ENCODE measurements at regions of chr1 and their contacts with region 1.

Region 1: DNA sequence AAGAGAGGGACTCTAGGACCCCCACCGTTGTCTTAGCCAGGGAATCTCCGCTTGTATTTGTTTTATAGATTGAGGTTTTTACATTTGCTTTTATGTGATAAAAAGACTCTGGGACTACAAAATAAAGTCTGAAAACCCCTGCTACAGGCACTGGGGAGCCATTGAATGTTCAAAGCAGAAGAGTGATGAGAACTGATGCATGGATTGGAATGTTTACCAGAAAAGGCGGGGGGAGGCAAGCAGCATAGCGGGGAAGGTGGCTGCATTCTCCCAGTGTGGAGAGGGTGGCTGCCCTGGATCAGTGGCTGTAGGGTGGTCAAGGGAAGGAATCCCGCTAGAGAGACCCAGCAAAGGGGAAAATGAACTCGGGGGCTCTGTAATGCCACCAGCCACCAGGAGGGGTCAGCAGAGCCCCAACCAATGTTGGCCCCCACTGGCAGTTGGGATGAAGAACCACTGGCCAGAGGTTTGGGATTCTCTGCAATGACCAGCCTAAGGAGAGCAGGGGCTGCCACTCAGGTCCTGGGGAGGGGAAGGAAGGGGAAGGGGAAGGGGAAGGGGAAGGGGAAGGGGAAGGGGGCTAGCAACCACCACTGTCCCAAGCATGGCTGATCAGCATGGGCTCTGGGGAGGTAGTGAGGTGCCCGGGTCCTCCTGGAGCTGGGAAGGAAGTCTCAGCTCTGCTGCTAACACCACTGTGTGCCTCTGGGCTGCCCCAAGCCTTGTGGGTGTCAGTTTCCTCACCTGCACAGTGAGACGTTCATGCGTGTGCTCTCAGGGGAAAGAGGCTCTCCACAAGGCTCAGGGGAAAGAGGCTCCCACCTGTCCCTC is 19.2 kb upstream of the PEF1 start:
- DNase-seq: peak; percentile 57 to 77
- ATAC-seq: peak; percentile 65 to 85 (median 78)
- H3K4me3 ChIP-seq: no peak overlapping the region
- H3K27ac ChIP-seq: no peak overlapping the region
- H3K4me1 ChIP-seq: no peaks in the 10 kb centered on the region
- H3K27me3 ChIP-seq: no peaks in the 10 kb centered on the region
- CTCF ChIP-seq: peak; percentile 86

Region 2: GRCh38 chr1:31617917-31618660 is 45.7 kb before region 1 on chr1:
- intact Hi-C with region 1: no loop called
- DNase-seq: peak; percentile 43 to 66
- ATAC-seq: peak; percentile 32 to 77 (median 60)
- H3K4me3 ChIP-seq: peak overlapping the region; percentile 71
- H3K27ac ChIP-seq: no peak overlapping the region
- H3K4me1 ChIP-seq: no peaks in the 10 kb centered on the region
- H3K27me3 ChIP-seq: peaks cover 0 to 24% (median 7%) of the 10 kb centered on the region in 3 donors
- CTCF ChIP-seq: peak; percentile 67

Region 3: GRCh38 chr1:31715087-31715872 is 51.4 kb after region 1 on chr1:
- intact Hi-C with region 1: loop called (anchors 5 kb)
- DNase-seq: peak; percentile 96 to 98
- ATAC-seq: peak; percentile 93 to 96 (median 94)
- H3K4me3 ChIP-seq: peak overlapping the region; percentile 66
- H3K27ac ChIP-seq: peak overlapping the region; percentile 91
- H3K4me1 ChIP-seq: peaks cover 12% of the 10 kb centered on the region
- H3K27me3 ChIP-seq: no peaks in the 10 kb centered on the region
- CTCF ChIP-seq: peak; percentile 82

Region 4: DNA sequence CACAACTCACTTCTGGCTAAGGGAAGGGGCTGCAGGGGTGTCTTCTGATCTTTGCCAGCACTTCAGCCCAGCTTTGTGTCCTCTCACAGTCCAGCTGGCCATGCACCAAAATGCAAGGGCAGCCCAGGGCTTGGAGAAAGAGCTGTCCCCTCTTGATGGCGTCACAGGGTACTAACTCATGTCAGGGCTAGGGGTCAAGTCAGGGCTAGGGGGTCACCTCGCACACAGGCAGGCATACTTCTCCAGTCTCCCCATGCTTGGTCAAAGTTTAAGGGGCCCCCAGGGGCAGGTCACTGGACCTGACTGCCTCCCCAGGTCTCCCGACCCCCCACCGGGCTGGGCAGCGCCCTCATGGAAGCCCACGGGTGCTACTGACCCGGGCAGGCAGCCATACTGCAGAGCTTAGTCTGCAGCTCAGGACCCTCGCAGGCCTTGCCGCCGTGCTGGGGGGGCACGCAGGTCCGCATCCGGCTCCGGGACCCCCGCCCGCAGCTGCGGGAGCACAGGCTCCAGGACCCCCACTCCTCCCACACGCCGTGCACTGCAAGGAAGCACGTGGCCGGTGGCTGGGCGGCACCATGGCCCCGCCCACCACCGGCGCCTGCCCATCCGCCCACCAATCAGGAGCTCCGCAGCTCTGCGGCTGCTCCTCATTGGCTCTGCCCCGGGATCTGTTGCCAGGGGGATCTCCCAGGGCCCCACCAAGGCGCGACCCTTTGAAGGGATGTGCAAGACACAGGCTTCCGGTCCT is 78.8 kb after region 1 on chr1:
- intact Hi-C with region 1: loop called in 1 of 2 experiments (anchors 2 kb)
- DNase-seq: no peak
- ATAC-seq: no peak
- H3K4me3 ChIP-seq: no peak overlapping the region
- H3K27ac ChIP-seq: no peak overlapping the region
- H3K4me1 ChIP-seq: no peaks in the 10 kb centered on the region
- H3K27me3 ChIP-seq: peaks cover 0 to 2% (median 0%) of the 10 kb centered on the region in 3 donors
- CTCF ChIP-seq: no peak

Region 5: GRCh38 chr1:32876341-32877210 is 1212.7 kb after region 1 on chr1:
- intact Hi-C with region 1: no loop called
- DNase-seq: peak; percentile 64 to 80
- ATAC-seq: peak; percentile 78 to 84 (median 78)
- H3K4me3 ChIP-seq: no peak overlapping the region
- H3K27ac ChIP-seq: no peak overlapping the region
- H3K4me1 ChIP-seq: peaks cover 4% of the 10 kb centered on the region
- H3K27me3 ChIP-seq: no peaks in the 10 kb centered on the region
- CTCF ChIP-seq: peak; percentile 84